ENCODE measurements at regions of chr11 and their contacts with region 1.

Region 1: DNA sequence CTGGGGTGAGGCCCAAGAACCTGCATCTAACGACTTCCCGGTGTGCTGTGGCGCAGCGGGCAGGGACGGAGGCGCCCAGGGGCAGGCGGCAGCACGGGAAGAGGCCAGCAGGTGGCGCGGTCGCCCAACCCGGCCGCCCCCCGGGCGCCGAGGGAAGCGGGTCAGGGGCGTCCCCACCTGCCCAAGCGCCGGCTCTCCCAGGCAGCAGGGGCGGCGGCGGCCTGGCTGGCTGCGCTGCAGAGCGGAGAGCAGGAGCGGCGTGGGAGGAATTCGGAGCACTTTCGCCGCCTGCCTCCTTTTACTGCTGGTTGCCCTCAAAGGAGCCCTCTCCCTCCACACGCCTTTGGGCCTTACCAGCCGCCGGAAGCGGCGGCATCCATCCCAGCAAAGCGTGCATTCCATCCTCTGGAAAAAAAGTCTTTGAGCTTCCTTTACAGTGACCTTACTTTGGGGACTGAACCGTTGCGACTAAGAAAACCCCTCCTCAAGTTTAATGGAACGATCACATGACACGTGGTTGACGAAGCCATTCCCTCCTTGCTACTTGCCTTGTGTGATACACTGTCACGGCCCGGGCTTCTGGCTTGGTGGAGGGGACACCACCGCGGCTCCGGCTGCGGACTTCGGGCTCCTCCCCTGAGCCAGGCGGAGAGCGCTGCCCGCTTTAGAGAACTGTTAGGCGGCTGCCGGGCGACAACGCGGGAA is 106.8 kb upstream of the CLMP start:
- DNase-seq: no peak
- H3K4me3 ChIP-seq: peak overlapping the region; percentile 47
- CTCF ChIP-seq: peak; percentile 79

Region 2: GRCh38 chr11:123103326-123103980 is 198.4 kb before region 1 on chr11:
- CTCF ChIA-PET with region 1: interaction called, 15 read pairs
- POLR2A ChIA-PET with region 1: interaction called, 3 read pairs
- DNase-seq: peak; percentile 45
- H3K4me3 ChIP-seq: no peak overlapping the region
- CTCF ChIP-seq: peak; percentile 48

Region 3: GRCh38 chr11:123254357-123254756 is 47.5 kb before region 1 on chr11:
- CTCF ChIA-PET with region 1: no interaction called
- POLR2A ChIA-PET with region 1: no interaction called
- DNase-seq: no peak
- H3K4me3 ChIP-seq: no peak overlapping the region
- CTCF ChIP-seq: no peak

Region 4: GRCh38 chr11:123286761-123287160 is 15.1 kb before region 1 on chr11:
- CTCF ChIA-PET with region 1: interaction called, 24 read pairs
- POLR2A ChIA-PET with region 1: no interaction called
- DNase-seq: no peak
- H3K4me3 ChIP-seq: no peak overlapping the region
- CTCF ChIP-seq: no peak

Region 5: DNA sequence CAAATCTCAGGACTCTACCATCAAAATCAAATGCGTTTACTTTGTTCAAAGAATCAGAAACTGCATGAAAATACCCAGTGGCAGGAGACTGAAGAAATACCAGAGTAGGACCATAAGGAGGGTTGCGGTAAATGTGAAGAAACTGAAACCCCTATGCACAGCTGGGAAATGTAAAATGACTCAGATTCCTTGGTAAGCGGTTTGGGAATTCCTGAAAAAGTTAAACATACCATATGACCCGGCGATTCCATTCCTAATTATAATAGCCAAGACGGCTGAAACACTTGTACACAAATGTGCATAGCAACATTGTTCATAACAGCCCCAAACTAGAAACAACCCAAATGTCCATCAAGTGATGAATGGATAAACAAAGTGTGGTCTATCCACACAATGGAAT is 14.2 kb after region 1 on chr11:
- CTCF ChIA-PET with region 1: interaction called, 22 read pairs
- POLR2A ChIA-PET with region 1: no interaction called
- DNase-seq: no peak
- H3K4me3 ChIP-seq: no peak overlapping the region
- CTCF ChIP-seq: no peak

Measured in AG04449 (cell line).